Left colon (tissue), 2 donors: ENCODE measurements at regions of chr18 and their contacts with region 1.

Region 1: GRCh38 chr18:23812546-23813440 is 123.5 kb downstream of the LAMA3 start:
- DNase-seq: no peak
- ATAC-seq: peak; percentile 26

Region 2: DNA sequence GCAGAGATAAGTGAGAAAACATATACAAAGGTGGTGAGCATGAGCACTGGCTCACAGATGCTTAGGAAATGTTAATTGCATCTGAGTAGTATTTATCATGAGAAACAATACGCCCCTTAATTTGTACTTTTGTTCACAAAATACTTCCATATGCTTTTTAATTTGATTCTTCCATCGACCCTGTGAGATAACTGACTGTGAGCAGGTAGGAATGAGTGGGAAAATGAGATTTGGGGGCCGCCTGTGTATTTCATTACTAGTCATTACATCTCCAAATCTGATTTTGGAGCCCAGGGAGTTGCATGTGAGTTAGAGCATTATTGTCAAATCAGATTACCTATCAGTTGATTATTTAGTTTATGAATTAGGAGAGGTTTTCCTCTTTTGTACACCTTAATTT is 189.8 kb before region 1 on chr18:
- intact Hi-C with region 1: loop called in 1 of 2 experiments (anchors 5 kb)
- DNase-seq: no peak
- ATAC-seq: no peak

Region 3: GRCh38 chr18:23716516-23716915 is 96.3 kb before region 1 on chr18:
- intact Hi-C with region 1: no loop called
- DNase-seq: no peak
- ATAC-seq: no peak

Region 4: DNA sequence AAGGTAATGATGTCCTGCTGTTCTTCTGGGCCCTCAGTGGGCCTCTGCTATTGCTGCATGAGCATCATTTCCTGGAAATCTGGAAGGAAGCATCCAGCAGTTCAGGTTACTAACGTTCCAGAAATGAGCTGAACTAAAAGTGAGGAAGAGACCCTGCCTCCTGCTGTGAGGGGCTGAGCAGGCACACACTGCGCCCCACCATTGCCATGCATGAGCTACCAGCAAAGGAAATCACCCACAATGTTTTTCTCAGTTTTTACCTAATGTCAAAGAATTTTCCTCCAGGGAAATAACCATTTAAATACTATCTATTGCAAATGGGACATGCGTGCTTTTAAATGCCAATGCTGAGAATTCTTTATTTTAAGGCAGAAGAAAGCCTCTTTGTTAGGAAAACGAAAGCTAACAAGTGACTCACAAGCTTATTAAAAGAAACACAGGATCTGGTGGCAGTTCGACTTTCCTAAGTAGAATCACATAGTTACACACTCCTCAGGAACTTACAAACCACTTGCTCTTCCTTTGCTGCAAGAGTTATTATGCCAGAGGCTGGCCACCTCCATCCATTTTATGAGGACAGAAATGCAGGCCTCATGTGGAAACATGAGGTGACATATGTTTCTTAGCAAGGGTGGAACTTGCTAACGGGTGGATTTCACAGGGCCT is 49.1 kb after region 1 on chr18:
- intact Hi-C with region 1: no loop called
- DNase-seq: no peak
- ATAC-seq: no peak

Region 5: DNA sequence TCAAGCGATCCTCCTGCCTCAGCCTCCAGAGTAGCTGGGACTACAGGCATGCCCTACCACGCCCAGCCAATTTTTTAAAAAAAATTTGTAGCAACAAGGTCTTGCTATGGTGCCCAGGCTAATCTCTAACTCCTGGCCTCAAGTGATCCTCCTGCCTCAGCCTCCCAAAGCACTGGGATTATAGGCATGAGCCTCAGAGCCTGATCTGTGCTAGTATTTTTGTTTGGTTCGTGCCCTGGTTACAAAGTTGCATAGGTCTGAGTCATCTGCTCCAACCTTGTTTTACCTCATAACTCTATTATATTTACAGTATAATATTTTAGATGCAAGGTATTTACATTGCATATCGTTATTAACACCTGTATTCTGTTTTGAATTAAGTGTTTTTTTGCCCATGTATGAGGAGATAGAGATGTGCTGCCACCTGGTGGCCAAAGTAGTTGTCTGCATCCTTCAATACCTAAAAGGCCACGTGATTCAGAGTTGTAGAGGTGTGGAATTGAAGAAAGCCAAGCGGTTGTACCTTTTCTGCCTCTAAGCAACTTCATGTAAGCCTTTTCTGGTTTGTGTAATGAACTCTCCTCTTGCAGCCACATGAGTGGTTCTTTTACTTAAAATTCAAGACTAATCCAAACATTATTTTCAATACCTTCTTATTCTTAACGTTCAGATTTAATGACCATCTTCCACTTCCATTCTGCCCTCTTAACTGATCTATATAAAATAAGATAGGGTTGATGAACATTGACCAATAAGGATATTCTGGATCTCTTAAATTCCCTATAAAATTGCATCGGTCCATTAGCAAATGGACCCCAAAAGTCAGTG is 306.2 kb after region 1 on chr18:
- intact Hi-C with region 1: loop called in 1 of 2 experiments (anchors 10 kb)
- DNase-seq: peak; percentile 46 to 80
- ATAC-seq: peak; percentile 82